Activated CD4-positive, alpha-beta T cell treated with anti-CD3 and anti-CD28 coated beads, Interleukin-2, amount 10 ng/mL, durations not matched to agents 7 days and 5 days (primary cell): ENCODE measurements at regions of chr16 and their contacts with region 1.

Region 1: DNA sequence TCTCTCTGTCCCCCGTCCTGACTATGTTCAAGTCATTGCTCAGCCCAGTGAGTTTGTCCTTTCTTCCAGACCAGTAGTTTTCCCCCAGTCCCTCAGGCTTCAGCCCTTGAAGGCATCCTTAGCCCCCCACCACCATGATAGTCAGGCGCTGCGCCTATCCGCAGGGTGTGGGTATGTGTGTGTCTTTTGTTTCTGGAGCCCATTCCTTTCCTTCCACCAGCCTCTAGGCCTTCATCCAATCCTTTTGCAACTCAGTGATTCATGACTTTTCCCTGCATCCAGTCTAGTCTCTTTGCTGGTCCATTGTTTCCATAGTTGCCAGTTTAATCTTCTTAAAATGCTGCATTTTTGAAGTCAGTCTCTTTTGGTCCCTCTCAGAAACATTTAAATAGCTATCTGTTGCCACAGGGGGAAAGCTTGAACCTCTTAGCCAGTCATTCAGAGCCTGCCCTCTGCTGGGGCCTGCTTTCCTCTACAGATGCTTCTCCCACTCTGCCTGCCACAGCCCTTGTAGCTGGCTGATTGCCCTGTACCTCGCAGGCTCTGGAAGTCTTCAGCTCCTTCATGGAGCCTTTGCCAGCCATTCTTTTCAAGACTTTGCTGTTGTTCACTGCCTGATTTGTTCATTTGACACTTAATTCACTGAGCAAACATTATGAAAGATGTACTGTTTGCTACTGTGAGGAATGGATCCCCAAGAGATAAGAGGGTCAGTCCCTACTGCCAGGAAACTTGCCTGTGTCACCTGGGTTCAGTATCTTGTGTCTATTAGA is 55.9 kb upstream of the ADCY7 start:
- DNase-seq: peak; percentile 81
- H3K4me3 Mint-ChIP-seq: no peak overlapping the region
- H3K27ac Mint-ChIP-seq: peak overlapping the region; percentile 62
- H3K4me1 Mint-ChIP-seq: peaks cover 38% of the 10 kb centered on the region
- H3K27me3 Mint-ChIP-seq: no peaks in the 10 kb centered on the region

Region 2: GRCh38 chr16:50065624-50066481 is 144.6 kb before region 1 on chr16 and contains the start of gene HEATR3:
- CTCF ChIA-PET with region 1: interaction called, 41 read pairs
- POLR2A ChIA-PET with region 1: interaction called, 3 read pairs
- DNase-seq: peak; percentile 93
- H3K4me3 Mint-ChIP-seq: peak within 1 kb of the TSS; percentile 86
- H3K27ac Mint-ChIP-seq: peak within 1 kb of the TSS; percentile 92
- H3K4me1 Mint-ChIP-seq: peaks cover 40% of the 10 kb centered on the region
- H3K27me3 Mint-ChIP-seq: no peaks in the 10 kb centered on the region
- total RNA-seq, gene HEATR3: 21.5 to 21.6 TPM

Region 3: GRCh38 chr16:50195276-50195675 is 15.2 kb before region 1 on chr16:
- CTCF ChIA-PET with region 1: interaction called, 20 read pairs
- POLR2A ChIA-PET with region 1: no interaction called
- DNase-seq: no peak
- H3K4me3 Mint-ChIP-seq: no peak overlapping the region
- H3K27ac Mint-ChIP-seq: peak overlapping the region; percentile 54
- H3K4me1 Mint-ChIP-seq: peaks cover 59% of the 10 kb centered on the region
- H3K27me3 Mint-ChIP-seq: no peaks in the 10 kb centered on the region

Region 4: DNA sequence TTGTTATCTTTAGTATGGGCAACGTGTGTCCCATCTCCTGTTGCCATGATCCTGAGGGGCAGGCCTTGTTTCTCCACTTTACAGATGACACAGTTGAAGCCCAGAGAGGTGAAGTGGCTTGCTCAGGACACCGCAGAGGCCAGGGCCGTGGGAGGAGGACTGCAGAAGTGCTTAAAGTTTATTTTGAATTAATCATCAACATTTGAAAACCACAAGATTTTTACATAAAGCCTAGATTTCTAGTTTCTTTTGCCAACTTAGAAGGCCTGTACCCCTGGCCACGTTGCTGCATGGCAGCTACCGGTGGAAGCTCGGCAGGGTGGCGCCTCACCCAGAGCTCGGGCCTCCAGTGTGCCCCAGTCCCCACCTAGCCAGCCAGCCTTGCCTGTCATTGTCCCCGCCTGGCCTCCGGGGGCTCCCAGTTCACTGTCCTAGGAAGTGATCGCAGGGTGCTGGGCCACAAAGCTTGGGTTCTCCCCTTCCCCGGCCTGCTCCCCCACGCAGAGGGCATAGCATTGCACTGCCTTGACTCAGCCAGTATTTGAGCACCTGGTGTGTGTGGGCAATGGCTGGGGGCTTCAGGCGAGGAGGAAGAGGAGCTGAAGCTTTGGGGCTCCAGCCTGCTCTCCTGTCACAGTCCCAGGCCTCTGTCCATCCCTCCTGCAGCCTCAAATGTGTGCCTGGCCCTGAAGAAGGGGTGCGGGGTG is 41.1 kb after region 1 on chr16:
- CTCF ChIA-PET with region 1: no interaction called
- POLR2A ChIA-PET with region 1: no interaction called
- DNase-seq: no peak
- H3K4me3 Mint-ChIP-seq: no peak overlapping the region
- H3K27ac Mint-ChIP-seq: no peak overlapping the region
- H3K4me1 Mint-ChIP-seq: peaks cover 25% of the 10 kb centered on the region
- H3K27me3 Mint-ChIP-seq: peaks cover 2% of the 10 kb centered on the region

Region 5: GRCh38 chr16:50354629-50355456 is 144.4 kb after region 1 on chr16:
- CTCF ChIA-PET with region 1: interaction called, 10 read pairs
- POLR2A ChIA-PET with region 1: no interaction called
- DNase-seq: no peak
- H3K4me3 Mint-ChIP-seq: no peak overlapping the region
- H3K27ac Mint-ChIP-seq: no peak overlapping the region
- H3K4me1 Mint-ChIP-seq: peaks cover 35% of the 10 kb centered on the region
- H3K27me3 Mint-ChIP-seq: no peaks in the 10 kb centered on the region

Region 6: DNA sequence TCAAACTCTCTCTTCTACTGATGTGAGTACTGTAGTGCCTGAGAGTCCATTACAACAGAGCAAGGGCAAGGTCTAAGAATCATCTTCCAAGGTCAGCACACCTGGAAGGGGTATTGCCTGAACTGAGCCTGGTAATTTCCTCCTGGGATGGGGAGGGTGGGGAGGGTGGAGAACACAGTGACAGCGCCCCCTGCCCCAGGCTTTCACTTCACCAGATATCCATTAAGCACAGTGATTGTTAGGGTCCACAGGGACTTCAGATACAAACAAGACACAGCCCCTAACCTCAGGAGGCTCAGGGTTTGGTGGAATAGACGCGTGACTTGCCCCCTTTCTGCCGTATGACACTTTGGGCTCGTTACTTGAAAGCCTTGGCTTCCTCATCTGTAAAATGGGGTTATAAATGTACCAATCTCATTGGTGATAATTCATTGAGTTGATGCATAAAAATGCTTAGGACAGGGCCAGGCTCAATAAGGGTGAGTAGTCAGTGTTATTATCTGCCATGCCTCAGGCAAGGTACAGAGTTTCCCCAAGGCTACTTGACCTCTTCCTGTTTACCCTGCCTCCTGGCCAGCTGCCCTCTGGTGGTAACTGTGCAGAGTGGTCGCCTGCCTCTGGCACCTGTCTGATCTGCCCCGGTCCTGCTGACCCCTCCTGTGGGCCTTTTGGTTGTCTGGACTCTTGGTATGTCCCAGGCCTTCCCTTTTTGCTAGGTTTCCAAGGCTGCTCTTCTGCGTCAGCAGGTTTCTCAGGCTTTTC is 171.4 kb after region 1 on chr16:
- CTCF ChIA-PET with region 1: no interaction called
- POLR2A ChIA-PET with region 1: no interaction called
- DNase-seq: no peak
- H3K4me3 Mint-ChIP-seq: no peak overlapping the region
- H3K27ac Mint-ChIP-seq: no peak overlapping the region
- H3K4me1 Mint-ChIP-seq: no peaks in the 10 kb centered on the region
- H3K27me3 Mint-ChIP-seq: peaks cover 3% of the 10 kb centered on the region